WTC11 (cell line): ENCODE measurements at regions of chr11 and their contacts with region 1.

Region 1: GRCh38 chr11:72787216-72788104 is 6.4 kb downstream of the STARD10 start:
- DNase-seq: peak; percentile 88
- ATAC-seq: peak; percentile 92
- H3K4me3 Mint-ChIP-seq: peak overlapping the region; percentile 40; the same call in 1 of the 2 replicates
- H3K27ac Mint-ChIP-seq: peak overlapping the region; percentile 84; the same call in 1 of the 2 replicates
- H3K4me1 Mint-ChIP-seq: peaks cover 26% of the 10 kb centered on the region
- H3K27me3 Mint-ChIP-seq: peaks cover under 1% of the 10 kb centered on the region; the same call in 1 of the 2 replicates
- CTCF ChIP-seq: no peak

Region 2: DNA sequence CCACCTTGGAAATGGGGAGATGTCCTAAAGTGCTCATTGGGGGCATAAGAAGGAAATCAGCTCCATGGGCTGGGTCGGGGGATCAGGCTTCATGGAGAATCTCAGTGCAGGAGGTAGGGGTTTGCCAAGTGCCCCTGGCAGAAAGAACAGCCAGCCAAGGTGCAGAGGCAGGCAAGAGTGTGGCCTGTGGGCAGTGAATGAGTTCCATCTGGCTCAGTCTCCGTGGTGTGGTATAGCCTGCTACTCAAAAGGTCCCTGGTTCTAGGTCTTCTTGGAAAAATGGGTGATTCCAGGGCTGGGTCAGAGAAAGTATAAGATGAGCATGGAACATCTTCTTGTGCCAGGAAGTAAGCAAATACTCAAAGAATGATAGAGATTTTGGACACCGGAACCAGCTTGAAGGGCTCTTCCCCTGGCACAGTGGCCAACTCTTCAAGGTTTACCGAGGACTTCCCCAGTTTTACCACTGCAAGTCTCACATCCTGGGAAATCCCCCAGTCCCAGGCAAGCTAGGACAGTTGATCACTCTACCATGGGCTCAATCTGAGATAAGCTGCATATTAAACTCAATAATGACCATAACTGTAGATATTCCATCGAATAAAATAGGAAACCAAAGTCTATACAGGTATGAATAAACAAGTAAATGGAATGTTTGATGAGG is 24.7 kb before region 1 on chr11:
- CTCF ChIA-PET with region 1: interaction called, 31 read pairs
- POLR2A ChIA-PET with region 1: no interaction called
- DNase-seq: no peak
- ATAC-seq: no peak
- H3K4me3 Mint-ChIP-seq: no peak overlapping the region
- H3K27ac Mint-ChIP-seq: no peak overlapping the region
- H3K4me1 Mint-ChIP-seq: peaks cover 24% of the 10 kb centered on the region
- H3K27me3 Mint-ChIP-seq: no peaks in the 10 kb centered on the region; the same call in 1 of the 2 replicates
- CTCF ChIP-seq: no peak

Region 3: GRCh38 chr11:72799441-72799840 is 12.0 kb after region 1 on chr11:
- CTCF ChIA-PET with region 1: interaction called, 42 read pairs
- POLR2A ChIA-PET with region 1: no interaction called
- DNase-seq: no peak
- ATAC-seq: no peak
- H3K4me3 Mint-ChIP-seq: no peak overlapping the region
- H3K27ac Mint-ChIP-seq: no peak overlapping the region
- H3K4me1 Mint-ChIP-seq: peaks cover 18% of the 10 kb centered on the region
- H3K27me3 Mint-ChIP-seq: no peaks in the 10 kb centered on the region
- CTCF ChIP-seq: no peak